ENCODE measurements at regions of chr12 and their contacts with region 1.

Region 1: DNA sequence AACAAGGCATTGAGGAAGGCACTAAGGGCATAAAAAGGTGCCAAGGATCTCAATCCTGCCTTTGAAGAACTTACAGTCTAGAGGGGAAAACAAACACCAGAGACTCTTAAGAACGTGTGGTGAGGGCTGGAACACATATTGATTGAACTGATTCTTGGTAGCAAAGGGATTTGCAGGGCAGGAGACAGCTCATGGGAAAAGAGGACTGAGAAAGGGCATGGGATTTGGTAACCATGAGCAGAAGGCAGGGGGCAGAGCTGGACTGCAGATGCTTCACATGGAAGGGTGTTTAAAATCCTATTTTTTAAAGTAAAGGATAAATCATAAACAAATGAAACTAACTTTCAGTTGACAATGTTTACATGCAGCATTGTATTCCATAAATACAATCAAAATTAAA is 203.1 kb downstream of the ITPR2 start:
- DNase-seq: no peak
- ATAC-seq: no peak
- H3K4me3 ChIP-seq: no peak overlapping the region
- H3K27ac ChIP-seq: no peak overlapping the region
- H3K4me1 ChIP-seq: no peaks in the 10 kb centered on the region
- H3K27me3 ChIP-seq: no peaks in the 10 kb centered on the region
- CTCF ChIP-seq: peak in 1 of 3 experiments; percentile 34; a peak in 2 of 6 replicates
- EP300 ChIP-seq: no peak
- POLR2A ChIP-seq: no peak
- RAD21 ChIP-seq: 0 out of 2 replicates have a peak, but pooled peaks have one; percentile 15

Region 2: DNA sequence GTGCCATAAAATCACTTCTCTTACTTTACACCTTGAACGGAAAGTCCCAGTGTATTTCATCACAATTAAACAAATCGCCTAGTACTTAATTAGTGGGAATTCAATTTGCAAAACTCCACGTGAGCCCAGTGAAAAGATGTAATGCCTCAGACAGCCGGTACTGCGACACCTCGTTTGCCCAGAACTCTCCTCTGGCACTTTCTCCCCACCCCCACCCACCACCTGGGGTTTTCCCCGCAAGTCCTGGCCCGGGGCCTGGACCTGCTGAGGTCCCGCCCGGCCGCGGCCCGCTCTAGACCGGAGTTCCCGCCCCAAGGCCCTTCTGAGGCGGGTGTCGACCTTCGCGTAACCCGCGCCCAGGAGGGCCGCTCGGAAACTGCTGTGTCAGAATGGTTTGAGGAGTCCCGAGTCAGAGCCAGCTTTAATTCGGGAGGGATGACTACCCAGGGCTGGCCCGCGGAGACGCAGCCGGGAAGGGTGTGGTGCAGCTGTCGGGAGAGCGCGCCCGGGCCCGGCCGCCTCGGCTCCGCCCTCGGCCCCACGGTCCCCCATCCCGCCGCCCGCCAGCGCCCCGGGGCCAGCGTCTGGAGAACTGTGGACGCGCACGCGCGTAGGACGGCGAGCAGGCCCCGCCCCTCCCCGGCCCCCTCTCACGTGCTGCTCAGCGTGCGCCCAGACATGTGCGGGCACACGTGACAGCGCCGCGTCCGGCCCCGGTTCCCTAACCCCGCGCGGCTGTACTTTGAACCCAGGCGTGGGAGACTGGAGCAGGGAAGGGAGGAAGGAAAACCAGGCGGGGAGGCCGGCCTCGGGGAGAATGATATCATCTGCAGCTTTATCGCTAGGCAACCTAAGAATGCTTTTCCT is 515.8 kb before region 1 on chr12:
- CTCF ChIA-PET with region 1: interaction called, 3 read pairs
- POLR2A ChIA-PET with region 1: no interaction called
- RAD21 ChIA-PET with region 1: no interaction called
- SMC1A ChIA-PET with region 1: no interaction called
- in situ Hi-C with region 1: loop called (anchors 25 kb)
- intact Hi-C with region 1: no loop called
- DNase-seq: no peak
- ATAC-seq: peak; percentile 95
- H3K4me3 ChIP-seq: peak overlapping the region; percentile 73; the same call in 1 of the 2 replicates
- H3K27ac ChIP-seq: no peak overlapping the region
- H3K4me1 ChIP-seq: peaks cover 17% of the 10 kb centered on the region
- H3K27me3 ChIP-seq: peaks cover 0 to 15% of the 10 kb centered on the region in 2 experiments; a peak in 1 of 4 replicates
- CTCF ChIP-seq: peak in 2 of 3 experiments; percentile 20 to 29; a peak in 3 of 6 replicates
- EP300 ChIP-seq: no peak
- POLR2A ChIP-seq: peak; percentile 68
- RAD21 ChIP-seq: no peak

Measured in GM12878 (cell line).